Activated B cell treated with CpG ODN at 0.5 μM for 24 hours (primary cell): ENCODE measurements at regions of chr22 and their contacts with region 1.

Region 1: GRCh38 chr22:42369245-42370041 is 62.8 kb downstream of the NFAM1 start:
- DNase-seq: peak; percentile 73
- ATAC-seq: peak; percentile 97
- H3K4me3 Mint-ChIP-seq: peak overlapping the region; percentile 88
- H3K27ac Mint-ChIP-seq: peak overlapping the region; percentile 42
- H3K4me1 Mint-ChIP-seq: peaks cover 18% of the 10 kb centered on the region
- H3K27me3 Mint-ChIP-seq: peaks cover 35% of the 10 kb centered on the region
- CTCF ChIP-seq: no peak

Region 2: GRCh38 chr22:41976401-41976901 is 393.0 kb before region 1 on chr22:
- CTCF ChIA-PET with region 1: no interaction called
- POLR2A ChIA-PET with region 1: interaction called, 10 read pairs
- intact Hi-C with region 1: no loop called
- DNase-seq: peak; percentile 60
- ATAC-seq: peak; percentile 75
- H3K4me3 Mint-ChIP-seq: peak overlapping the region; percentile 49
- H3K27ac Mint-ChIP-seq: no peak overlapping the region
- H3K4me1 Mint-ChIP-seq: peaks cover 12% of the 10 kb centered on the region
- H3K27me3 Mint-ChIP-seq: peaks cover 43% of the 10 kb centered on the region
- CTCF ChIP-seq: no peak

Region 3: DNA sequence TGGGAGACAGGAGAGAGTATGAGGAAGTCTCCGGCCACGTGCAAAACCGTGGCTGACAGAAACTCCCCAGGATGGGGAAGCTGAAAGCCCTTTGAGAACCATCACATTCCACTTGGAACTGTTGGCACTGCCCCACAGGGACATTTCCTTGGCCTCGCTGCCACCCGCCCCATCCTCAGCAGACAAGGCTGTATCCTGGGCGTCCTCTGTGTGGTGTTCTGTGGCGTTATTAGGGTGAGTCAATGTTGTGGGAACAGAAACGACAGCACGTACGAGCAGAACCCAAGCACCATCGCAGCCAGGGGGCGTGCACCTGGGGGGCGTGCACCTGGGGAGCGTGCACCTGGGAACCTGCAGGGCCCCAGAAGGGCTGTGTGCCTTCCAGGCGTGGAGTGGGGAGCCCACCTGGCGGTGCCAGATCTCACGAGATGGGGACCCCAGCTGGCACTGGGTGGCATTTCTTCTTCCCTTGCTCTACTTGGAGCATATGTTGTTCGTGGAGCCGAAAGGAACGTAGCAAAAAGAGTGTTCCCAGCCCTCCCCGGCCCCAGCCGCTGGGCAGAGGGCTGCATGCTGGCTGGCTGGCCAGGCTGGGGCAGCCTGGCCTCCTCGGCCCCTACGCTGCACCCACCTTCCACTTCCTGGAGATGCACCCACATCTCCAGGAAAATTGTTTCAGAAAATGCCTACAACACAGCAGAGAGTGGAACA is 27.3 kb after region 1 on chr22:
- CTCF ChIA-PET with region 1: interaction called, 3 read pairs
- POLR2A ChIA-PET with region 1: interaction called, 9 read pairs
- intact Hi-C with region 1: loop called (anchors 1 kb)
- DNase-seq: peak; percentile 49
- ATAC-seq: peak; percentile 59
- H3K4me3 Mint-ChIP-seq: peak overlapping the region; percentile 75
- H3K27ac Mint-ChIP-seq: peak overlapping the region; percentile 90
- H3K4me1 Mint-ChIP-seq: peaks cover 51% of the 10 kb centered on the region
- H3K27me3 Mint-ChIP-seq: no peaks in the 10 kb centered on the region
- CTCF ChIP-seq: no peak

Region 4: GRCh38 chr22:42452456-42452855 is 83.0 kb after region 1 on chr22:
- CTCF ChIA-PET with region 1: no interaction called
- POLR2A ChIA-PET with region 1: no interaction called
- intact Hi-C with region 1: no loop called
- DNase-seq: no peak
- ATAC-seq: no peak
- H3K4me3 Mint-ChIP-seq: no peak overlapping the region
- H3K27ac Mint-ChIP-seq: no peak overlapping the region
- H3K4me1 Mint-ChIP-seq: peaks cover 2% of the 10 kb centered on the region
- H3K27me3 Mint-ChIP-seq: peaks cover 10% of the 10 kb centered on the region
- CTCF ChIP-seq: no peak

Region 5: DNA sequence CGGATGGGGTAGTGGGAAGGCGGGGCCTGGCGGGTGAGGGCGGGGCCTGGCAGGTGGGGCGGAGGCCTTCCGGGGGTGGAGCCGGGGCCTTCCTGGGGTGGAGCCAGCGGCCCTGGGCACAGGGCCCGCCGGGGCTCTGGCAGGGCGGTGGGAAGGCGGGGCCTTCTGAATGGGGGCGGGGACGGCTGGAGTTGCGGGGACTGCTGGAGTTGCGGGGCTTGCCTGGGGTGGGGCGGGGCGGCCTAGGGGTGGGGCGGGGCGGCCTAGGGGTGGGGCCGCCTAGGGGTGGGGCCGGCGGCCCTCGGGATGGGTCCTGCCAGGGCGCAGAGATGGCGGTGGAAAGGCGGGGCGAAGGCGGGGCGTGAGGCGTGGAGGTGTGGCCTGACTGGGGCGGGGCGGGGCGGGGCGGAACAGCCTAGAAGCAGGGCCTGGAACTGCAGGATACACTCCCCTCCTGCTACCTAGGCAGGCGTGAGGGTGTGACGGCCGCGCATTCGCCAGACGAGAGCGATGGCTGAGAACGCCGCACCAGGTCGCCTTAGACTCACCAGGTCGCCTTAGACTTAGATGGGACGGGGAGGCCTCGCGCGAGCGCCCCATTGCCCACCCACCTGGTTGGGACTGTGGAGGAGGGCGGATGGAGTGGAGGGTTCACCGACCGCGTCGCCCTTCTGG is 130.9 kb after region 1 on chr22:
- CTCF ChIA-PET with region 1: no interaction called
- POLR2A ChIA-PET with region 1: no interaction called
- intact Hi-C with region 1: loop called (anchors 2 kb)
- DNase-seq: peak; percentile 84
- ATAC-seq: peak; percentile 89
- H3K4me3 Mint-ChIP-seq: peak overlapping the region; percentile 70
- H3K27ac Mint-ChIP-seq: no peak overlapping the region
- H3K4me1 Mint-ChIP-seq: peaks cover 12% of the 10 kb centered on the region
- H3K27me3 Mint-ChIP-seq: no peaks in the 10 kb centered on the region
- CTCF ChIP-seq: no peak